Sigmoid colon (tissue), 7 donors: ENCODE measurements at regions of chr16 and their contacts with region 1.

Region 1: DNA sequence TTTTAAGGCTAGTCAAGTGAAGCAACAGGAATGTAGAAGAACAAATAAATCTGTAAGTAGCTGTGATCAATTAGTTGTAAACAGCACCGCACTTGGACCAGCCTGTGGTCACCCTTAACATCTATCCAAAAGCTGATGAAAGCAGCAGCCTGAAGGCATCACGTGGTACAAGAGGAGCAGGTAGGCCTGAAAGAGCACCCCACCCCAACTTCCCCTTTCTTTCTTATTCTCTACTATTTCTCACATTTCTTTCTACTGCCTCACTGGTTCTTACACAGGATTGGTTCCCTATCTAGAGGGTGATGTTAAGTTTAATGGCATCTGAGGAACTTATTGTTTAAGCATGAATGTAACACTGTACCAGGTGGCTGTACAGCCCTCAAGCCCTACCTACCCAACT is 42.6 kb upstream of the CLEC18B start:
- DNase-seq: no peak
- H3K4me3 ChIP-seq: no peak overlapping the region
- H3K27ac ChIP-seq: no peak overlapping the region
- H3K4me1 ChIP-seq: peaks cover 0 to 15% (median 6%) of the 10 kb centered on the region in 4 donors
- H3K27me3 ChIP-seq: no peaks in the 10 kb centered on the region
- CTCF ChIP-seq: no peak
- EP300 ChIP-seq: no peak
- POLR2A ChIP-seq: no peak

Region 2: GRCh38 chr16:74606521-74607310 is 142.8 kb after region 1 on chr16 and contains the start of gene GLG1:
- intact Hi-C with region 1: loop called (anchors 5 kb)
- DNase-seq: peak; percentile 94
- H3K4me3 ChIP-seq: peak within 1 kb of the TSS; percentile 77 to 99 (median 84)
- H3K27ac ChIP-seq: peak within 1 kb of the TSS; percentile 93 to 99 (median 96)
- H3K4me1 ChIP-seq: peaks cover 0 to 36% (median 33%) of the 10 kb centered on the region in 4 donors
- H3K27me3 ChIP-seq: no peaks in the 10 kb centered on the region
- CTCF ChIP-seq: no peak
- EP300 ChIP-seq: no peak
- POLR2A ChIP-seq: peak; percentile 80 to 86
- total RNA-seq, gene GLG1: 78.7 to 138 (median 98.3) TPM

Region 3: GRCh38 chr16:74709441-74709877 is 245.6 kb after region 1 on chr16:
- intact Hi-C with region 1: no loop called
- DNase-seq: peak; percentile 85
- H3K4me3 ChIP-seq: no peak overlapping the region
- H3K27ac ChIP-seq: peak overlapping the region in 1 of 4 donors; percentile 4
- H3K4me1 ChIP-seq: no peaks in the 10 kb centered on the region
- H3K27me3 ChIP-seq: no peaks in the 10 kb centered on the region
- CTCF ChIP-seq: peak; percentile 84 to 95 (median 92)
- EP300 ChIP-seq: no peak
- POLR2A ChIP-seq: no peak